Activated CD8-positive, alpha-beta T cell treated with anti-CD3 and anti-CD28 coated beads for 36 hours (primary cell): ENCODE measurements at regions of chr1 and their contacts with region 1.

Region 1: DNA sequence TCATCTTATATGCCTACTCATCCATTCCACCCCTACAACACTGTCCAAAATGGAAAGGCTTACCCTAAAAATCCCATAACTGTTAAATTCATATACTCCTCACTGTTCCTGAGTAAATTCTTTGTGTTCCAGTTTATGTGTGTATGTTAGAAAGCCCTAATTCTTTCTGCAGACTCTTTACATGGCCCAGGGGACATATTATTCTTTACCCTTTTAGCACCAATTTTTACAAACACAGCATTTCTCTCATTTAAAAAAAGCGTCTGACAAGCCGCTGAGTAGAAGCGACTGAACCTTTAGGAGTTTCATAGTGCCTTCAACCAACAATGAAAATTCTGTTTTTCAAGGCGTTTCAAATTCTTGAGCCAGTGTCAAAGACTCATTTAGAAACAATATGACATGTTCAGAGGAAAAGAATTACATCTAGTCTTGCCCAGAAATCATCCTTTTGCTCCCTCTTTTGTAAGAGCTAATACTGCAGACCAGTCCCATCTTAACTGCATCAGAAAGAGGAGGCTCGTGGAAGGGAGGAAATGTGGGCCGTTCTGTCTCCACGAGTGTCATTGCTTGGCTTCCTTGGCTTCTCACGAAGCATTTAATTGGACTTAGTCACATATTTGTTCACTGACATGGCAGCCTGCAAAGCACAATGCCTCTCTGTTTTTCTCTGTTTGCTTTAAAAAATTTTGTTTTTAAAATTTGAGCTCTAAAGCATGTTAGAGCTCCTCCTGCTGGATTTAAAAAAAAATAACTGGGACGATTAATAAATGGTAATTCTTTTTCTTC is 21.3 kb upstream of the C1orf105 start:
- DNase-seq: peak; percentile 30
- ATAC-seq: peak; percentile 30
- H3K4me3 Mint-ChIP-seq: peak overlapping the region; percentile 40
- H3K27ac Mint-ChIP-seq: peak overlapping the region; percentile 71
- H3K4me1 Mint-ChIP-seq: peaks cover 71% of the 10 kb centered on the region
- H3K27me3 Mint-ChIP-seq: no peaks in the 10 kb centered on the region
- CTCF ChIP-seq: peak; percentile 83

Region 2: DNA sequence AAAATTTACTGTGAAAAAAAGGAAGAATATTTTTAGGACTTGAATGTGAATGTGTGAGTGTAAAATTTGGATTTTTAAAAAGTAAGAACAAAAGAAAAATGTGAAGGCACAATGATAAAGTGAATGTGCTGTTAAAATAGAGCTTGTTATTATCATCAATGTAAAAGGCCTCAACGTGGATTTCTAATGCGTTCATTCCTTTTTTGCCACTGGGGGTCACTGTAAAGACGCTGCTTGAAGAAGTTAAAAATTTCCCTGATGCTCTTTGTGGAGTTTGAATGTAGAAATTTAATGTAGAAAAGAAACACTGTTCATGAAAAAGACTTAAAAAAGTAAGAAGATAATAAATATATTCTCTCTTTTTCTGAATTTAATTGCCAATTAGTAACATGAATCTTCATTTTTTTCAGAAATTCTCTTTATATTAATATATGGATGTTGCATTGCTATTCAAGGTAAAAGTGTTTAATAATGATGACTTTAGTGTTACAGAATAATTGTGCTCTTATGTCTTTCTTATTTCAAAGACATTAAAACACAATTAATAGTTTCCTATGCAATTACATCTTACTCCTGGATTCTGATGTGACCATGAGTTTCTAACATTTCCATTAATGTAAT is 396.3 kb before region 1 on chr1:
- CTCF ChIA-PET with region 1: interaction called, 41 read pairs
- POLR2A ChIA-PET with region 1: no interaction called
- intact Hi-C with region 1: loop called (anchors 10 kb)
- DNase-seq: peak; percentile 42
- ATAC-seq: no peak
- H3K4me3 Mint-ChIP-seq: no peak overlapping the region
- H3K27ac Mint-ChIP-seq: no peak overlapping the region
- H3K4me1 Mint-ChIP-seq: no peaks in the 10 kb centered on the region
- H3K27me3 Mint-ChIP-seq: peaks cover under 1% of the 10 kb centered on the region
- CTCF ChIP-seq: peak; percentile 73

Region 3: GRCh38 chr1:172135076-172135672 is 264.0 kb before region 1 on chr1:
- CTCF ChIA-PET with region 1: interaction called, 3 read pairs
- POLR2A ChIA-PET with region 1: no interaction called
- intact Hi-C with region 1: loop called (anchors 10 kb)
- DNase-seq: peak; percentile 40
- ATAC-seq: peak; percentile 43
- H3K4me3 Mint-ChIP-seq: no peak overlapping the region
- H3K27ac Mint-ChIP-seq: no peak overlapping the region
- H3K4me1 Mint-ChIP-seq: peaks cover 18% of the 10 kb centered on the region
- H3K27me3 Mint-ChIP-seq: no peaks in the 10 kb centered on the region
- CTCF ChIP-seq: peak; percentile 60

Region 4: DNA sequence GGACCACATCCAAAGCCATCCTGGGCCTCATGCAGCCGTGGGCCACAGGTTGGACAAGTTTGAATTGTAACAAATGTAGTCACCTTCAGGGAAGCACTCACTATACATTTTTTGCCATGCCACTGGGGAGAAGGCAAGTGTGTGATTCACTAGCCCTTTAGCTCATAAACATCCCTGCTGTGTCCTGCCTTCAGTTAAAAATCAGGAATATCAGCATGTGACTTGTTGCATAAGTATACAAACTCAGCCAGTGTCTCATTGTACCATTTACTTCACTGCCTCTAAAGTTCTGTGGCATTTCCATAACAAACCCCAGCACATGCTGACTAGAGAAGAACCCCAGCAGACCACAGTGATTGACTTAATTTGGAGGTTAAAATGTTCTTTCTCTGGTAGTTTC is 120.7 kb before region 1 on chr1:
- CTCF ChIA-PET with region 1: no interaction called
- POLR2A ChIA-PET with region 1: no interaction called
- intact Hi-C with region 1: loop called (anchors 10 kb)
- DNase-seq: no peak
- ATAC-seq: no peak
- H3K4me3 Mint-ChIP-seq: no peak overlapping the region
- H3K27ac Mint-ChIP-seq: no peak overlapping the region
- H3K4me1 Mint-ChIP-seq: peaks cover 13% of the 10 kb centered on the region
- H3K27me3 Mint-ChIP-seq: no peaks in the 10 kb centered on the region
- CTCF ChIP-seq: no peak

Region 5: DNA sequence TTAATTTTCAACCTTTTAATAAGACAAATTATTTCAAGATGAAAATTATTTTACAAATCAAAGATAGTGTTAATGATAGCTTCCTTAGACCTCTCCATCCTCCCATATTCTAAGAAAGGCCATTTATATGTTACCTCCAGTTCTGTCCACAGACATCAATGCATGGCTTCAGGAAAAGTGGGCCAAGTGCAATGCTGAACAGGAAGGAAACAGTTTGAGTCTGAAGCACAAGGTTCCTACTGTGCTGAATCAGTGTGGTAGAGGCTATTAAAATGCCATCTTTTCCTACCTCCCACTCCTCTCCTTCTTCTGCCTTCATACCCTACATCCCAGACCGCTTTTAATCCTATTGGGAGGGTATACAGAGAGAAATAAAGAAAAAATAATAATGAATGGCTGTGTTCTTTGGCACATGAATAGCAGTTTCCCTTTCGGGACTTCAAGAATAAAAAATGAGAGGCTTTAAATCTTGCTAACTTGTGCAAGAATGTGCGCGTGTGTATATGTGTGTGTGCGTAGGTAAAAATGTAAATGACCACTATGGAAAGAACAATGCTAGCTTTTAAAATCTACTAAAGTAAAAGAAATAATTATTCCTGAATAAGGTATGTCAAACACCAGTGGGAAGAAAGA is 41.3 kb before region 1 on chr1:
- CTCF ChIA-PET with region 1: interaction called, 10 read pairs
- POLR2A ChIA-PET with region 1: interaction called, 17 read pairs
- intact Hi-C with region 1: loop called (anchors 5 kb)
- DNase-seq: peak; percentile 35
- ATAC-seq: peak; percentile 10
- H3K4me3 Mint-ChIP-seq: peak overlapping the region; percentile 41
- H3K27ac Mint-ChIP-seq: peak overlapping the region; percentile 92
- H3K4me1 Mint-ChIP-seq: peaks cover 71% of the 10 kb centered on the region
- H3K27me3 Mint-ChIP-seq: no peaks in the 10 kb centered on the region
- CTCF ChIP-seq: no peak